CD4-positive, alpha-beta T cell (primary cell): ENCODE measurements at regions of chr1 and their contacts with region 1.

Region 1: GRCh38 chr1:151510957-151511635 is at the start of gene CGN:
- DNase-seq: peak; percentile 70 to 95 (median 84)
- ATAC-seq: peak; percentile 97
- H3K4me3 ChIP-seq: peak within 1 kb of the TSS; percentile 76
- H3K4me3 Mint-ChIP-seq: peak within 1 kb of the TSS; percentile 97
- H3K27ac ChIP-seq: peak within 1 kb of the TSS in 1 of 2 donors; percentile 6
- H3K27ac Mint-ChIP-seq: peak within 1 kb of the TSS; percentile 75
- H3K4me1 ChIP-seq: peaks cover 30% of the 10 kb centered on the region
- H3K4me1 Mint-ChIP-seq: peaks cover 32% of the 10 kb centered on the region
- H3K27me3 ChIP-seq: no peaks in the 10 kb centered on the region
- H3K27me3 Mint-ChIP-seq: no peaks in the 10 kb centered on the region
- CTCF ChIP-seq: no peak
- total RNA-seq, gene CGN: 0.08 to 0.28 TPM

Region 2: GRCh38 chr1:151465026-151465425 is 46.1 kb before region 1 on chr1:
- CTCF ChIA-PET with region 1: no interaction called
- POLR2A ChIA-PET with region 1: interaction called, 11 read pairs
- intact Hi-C with region 1: loop called in 1 of 2 experiments (anchors 2 kb)
- DNase-seq: no peak
- ATAC-seq: no peak
- H3K4me3 ChIP-seq: no peak overlapping the region
- H3K4me3 Mint-ChIP-seq: no peak overlapping the region
- H3K27ac ChIP-seq: no peak overlapping the region
- H3K27ac Mint-ChIP-seq: no peak overlapping the region
- H3K4me1 ChIP-seq: no peaks in the 10 kb centered on the region
- H3K4me1 Mint-ChIP-seq: peaks cover 2% of the 10 kb centered on the region
- H3K27me3 ChIP-seq: peaks cover 4 to 10% of the 10 kb centered on the region in 2 experiments
- H3K27me3 Mint-ChIP-seq: peaks cover 41% of the 10 kb centered on the region
- CTCF ChIP-seq: no peak

Region 3: DNA sequence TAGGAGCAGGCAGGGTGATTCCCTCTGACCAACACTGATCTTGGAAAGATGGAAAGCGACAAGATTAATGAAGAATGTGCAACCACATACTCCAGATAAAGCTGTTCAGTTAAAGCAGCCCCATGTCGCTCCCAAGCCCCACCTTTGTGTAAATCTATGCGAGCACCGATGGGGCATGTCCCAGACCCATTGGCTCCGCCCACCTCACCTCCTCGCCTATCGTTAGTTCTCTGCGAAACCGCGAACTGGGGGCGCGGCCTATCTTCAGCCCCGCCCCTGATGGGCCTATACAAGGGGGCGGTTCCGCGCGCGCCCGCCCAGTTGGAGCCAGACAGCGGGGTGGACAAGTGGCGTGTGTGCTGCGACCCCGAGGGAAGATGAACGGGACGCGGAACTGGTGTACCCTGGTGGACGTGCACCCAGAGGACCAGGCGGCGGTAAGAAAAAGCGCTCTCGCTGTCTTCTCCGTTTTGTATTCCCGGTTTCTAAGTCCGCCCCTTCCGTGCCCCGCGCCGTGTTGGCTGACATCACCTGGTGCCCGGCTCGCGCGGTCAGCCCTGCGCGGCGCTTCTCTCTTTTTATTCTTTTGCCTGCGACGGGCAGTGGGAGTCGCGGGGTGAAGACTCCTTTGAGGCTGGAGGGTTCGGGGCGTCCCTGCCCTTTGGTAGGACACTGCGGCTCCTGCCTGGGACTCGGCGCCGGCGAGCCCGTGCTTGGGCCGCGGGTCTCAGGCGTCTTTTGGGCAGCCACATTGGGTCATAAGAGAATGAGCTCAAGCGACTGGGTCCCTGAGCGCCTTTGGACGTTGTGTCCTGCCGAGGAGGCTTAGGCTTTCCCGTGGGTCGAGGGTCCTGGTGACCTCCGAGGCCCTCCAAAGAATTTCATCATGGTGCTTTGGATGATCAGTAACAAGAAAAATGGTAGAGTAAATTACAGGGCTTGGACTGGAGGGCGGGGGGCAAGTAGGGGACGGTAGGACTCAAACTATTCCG is 29.2 kb after region 1 on chr1 and contains the start of gene TUFT1:
- CTCF ChIA-PET with region 1: interaction called, 3 read pairs
- POLR2A ChIA-PET with region 1: interaction called, 7 read pairs
- intact Hi-C with region 1: loop called in 1 of 2 experiments (anchors 2 kb)
- DNase-seq: peak; percentile 88 to 97 (median 93)
- ATAC-seq: peak; percentile 99
- H3K4me3 ChIP-seq: peak within 1 kb of the TSS; percentile 73
- H3K4me3 Mint-ChIP-seq: peak within 1 kb of the TSS; percentile 97
- H3K27ac ChIP-seq: peak within 1 kb of the TSS in 1 of 2 donors; percentile 10
- H3K27ac Mint-ChIP-seq: peak within 1 kb of the TSS; percentile 86
- H3K4me1 ChIP-seq: peaks cover 25% of the 10 kb centered on the region
- H3K4me1 Mint-ChIP-seq: peaks cover 24% of the 10 kb centered on the region
- H3K27me3 ChIP-seq: no peaks in the 10 kb centered on the region
- H3K27me3 Mint-ChIP-seq: no peaks in the 10 kb centered on the region
- CTCF ChIP-seq: no peak
- total RNA-seq, gene TUFT1: 7.2 to 9.6 TPM